ENCODE measurements at regions of chr5 and their contacts with region 1.

Region 1: DNA sequence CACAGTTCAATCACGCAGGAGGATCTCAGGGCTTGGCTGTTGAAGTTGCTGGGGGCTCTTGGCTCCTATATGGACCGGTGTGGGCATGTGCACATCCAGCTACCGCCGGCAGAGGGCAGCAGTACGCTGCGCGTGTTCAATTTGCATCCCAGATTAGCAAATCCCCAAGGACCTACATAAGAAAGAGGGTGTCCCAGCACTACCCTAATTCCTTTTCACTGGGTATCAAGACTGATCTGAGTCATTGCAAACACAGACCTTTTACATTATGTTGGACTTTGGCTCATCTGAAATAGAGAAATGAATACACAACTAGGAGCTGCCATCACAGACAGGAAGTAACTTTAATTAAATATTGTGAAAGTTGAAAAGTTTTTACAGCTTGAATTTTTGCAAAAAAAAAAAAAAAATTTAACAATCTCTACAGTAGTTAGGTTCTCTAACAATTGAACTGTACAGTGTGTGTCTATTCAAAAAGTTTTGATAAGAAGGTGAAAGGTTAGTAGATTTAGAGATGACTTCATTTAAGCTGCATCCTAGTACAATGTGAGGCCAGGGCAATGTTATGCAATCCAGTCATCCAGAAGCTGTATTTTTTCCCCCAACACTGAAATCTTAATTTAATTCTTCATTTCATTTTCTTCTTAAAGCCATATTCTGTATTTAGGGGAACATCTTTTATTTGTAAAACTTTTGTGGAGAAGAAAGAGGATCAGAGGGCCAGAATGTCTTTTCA is 404.0 kb downstream of the EBF1 start:
- DNase-seq: peak; percentile 85
- ATAC-seq: peak; percentile 94
- H3K4me3 ChIP-seq: no peak overlapping the region
- H3K27ac ChIP-seq: no peak overlapping the region
- H3K4me1 ChIP-seq: no peaks in the 10 kb centered on the region
- H3K27me3 ChIP-seq: no peaks in the 10 kb centered on the region
- CTCF ChIP-seq: peak; percentile 88 to 97 (median 88)
- EP300 ChIP-seq: peak; percentile 41 to 66; a peak in 2 of 4 replicates
- POLR2A ChIP-seq: no peak
- RAD21 ChIP-seq: peak; percentile 88

Region 2: GRCh38 chr5:158165638-158166037 is 530.1 kb before region 1 on chr5:
- CTCF ChIA-PET with region 1: interaction called, 11 read pairs
- POLR2A ChIA-PET with region 1: no interaction called
- RAD21 ChIA-PET with region 1: no interaction called
- SMC1A ChIA-PET with region 1: interaction called, 10 read pairs
- in situ Hi-C with region 1: no loop called
- intact Hi-C with region 1: no loop called
- DNase-seq: no peak
- ATAC-seq: no peak
- H3K4me3 ChIP-seq: no peak overlapping the region
- H3K27ac ChIP-seq: no peak overlapping the region
- H3K4me1 ChIP-seq: no peaks in the 10 kb centered on the region
- H3K27me3 ChIP-seq: peaks cover 2% of the 10 kb centered on the region in 2 experiments; a peak in 2 of 4 replicates
- CTCF ChIP-seq: peak in 2 of 3 experiments; percentile 8 to 14; a peak in 1 of 6 replicates
- EP300 ChIP-seq: no peak
- POLR2A ChIP-seq: no peak
- RAD21 ChIP-seq: no peak

Region 3: DNA sequence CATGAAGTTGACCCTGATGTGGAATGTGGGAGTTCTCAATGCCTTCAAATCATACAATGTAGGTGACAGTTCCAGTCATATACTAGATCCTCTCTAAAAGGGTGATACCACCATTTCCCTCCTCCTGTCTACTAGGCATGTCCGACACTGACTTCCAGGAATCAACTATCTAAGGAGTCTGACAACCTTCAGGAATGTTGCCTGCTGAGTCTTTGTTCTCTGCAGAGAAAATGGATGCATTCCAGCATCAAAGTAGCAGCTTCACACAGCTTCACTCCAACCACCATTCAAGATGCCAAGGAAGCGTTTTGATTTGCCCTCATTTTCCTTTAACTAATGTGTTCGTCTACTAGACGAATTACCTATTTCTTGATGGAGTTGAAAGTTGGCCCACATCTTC is 126.2 kb before region 1 on chr5:
- CTCF ChIA-PET with region 1: no interaction called
- POLR2A ChIA-PET with region 1: no interaction called
- RAD21 ChIA-PET with region 1: no interaction called
- SMC1A ChIA-PET with region 1: no interaction called
- in situ Hi-C with region 1: no loop called
- intact Hi-C with region 1: no loop called
- DNase-seq: no peak
- ATAC-seq: no peak
- H3K4me3 ChIP-seq: no peak overlapping the region
- H3K27ac ChIP-seq: no peak overlapping the region
- H3K4me1 ChIP-seq: peaks cover 4% of the 10 kb centered on the region
- H3K27me3 ChIP-seq: no peaks in the 10 kb centered on the region; a peak in 1 of 4 replicates
- CTCF ChIP-seq: no peak
- EP300 ChIP-seq: no peak
- POLR2A ChIP-seq: no peak
- RAD21 ChIP-seq: no peak

Region 4: DNA sequence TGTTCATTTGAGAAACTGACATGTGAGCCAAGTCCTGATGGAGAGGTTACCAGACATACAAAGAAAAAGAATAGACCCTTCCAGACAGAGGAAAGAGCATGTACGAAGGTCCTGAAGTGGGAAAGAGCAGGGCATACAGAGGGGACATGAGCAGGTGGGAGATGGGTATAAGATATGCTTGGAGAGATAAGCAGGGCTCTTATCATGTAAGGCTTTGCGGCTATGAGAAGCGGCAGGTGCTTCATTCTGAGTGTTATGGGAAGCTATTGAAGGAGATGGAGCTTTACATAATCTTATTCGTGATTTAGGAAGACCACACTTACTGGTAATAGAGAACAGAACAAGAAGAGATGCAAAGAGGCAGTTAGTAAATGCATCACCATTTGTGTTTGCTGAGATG is 13.1 kb before region 1 on chr5:
- CTCF ChIA-PET with region 1: interaction called, 18 read pairs
- POLR2A ChIA-PET with region 1: no interaction called
- RAD21 ChIA-PET with region 1: interaction called, 7 read pairs
- SMC1A ChIA-PET with region 1: interaction called, 11 read pairs
- in situ Hi-C with region 1: no loop called
- intact Hi-C with region 1: no loop called
- DNase-seq: no peak
- ATAC-seq: no peak
- H3K4me3 ChIP-seq: no peak overlapping the region
- H3K27ac ChIP-seq: no peak overlapping the region
- H3K4me1 ChIP-seq: peaks cover 3% of the 10 kb centered on the region; the same call in 1 of the 2 replicates
- H3K27me3 ChIP-seq: no peaks in the 10 kb centered on the region; a peak in 1 of 4 replicates
- CTCF ChIP-seq: no peak
- EP300 ChIP-seq: no peak
- POLR2A ChIP-seq: no peak
- RAD21 ChIP-seq: no peak

Region 5: DNA sequence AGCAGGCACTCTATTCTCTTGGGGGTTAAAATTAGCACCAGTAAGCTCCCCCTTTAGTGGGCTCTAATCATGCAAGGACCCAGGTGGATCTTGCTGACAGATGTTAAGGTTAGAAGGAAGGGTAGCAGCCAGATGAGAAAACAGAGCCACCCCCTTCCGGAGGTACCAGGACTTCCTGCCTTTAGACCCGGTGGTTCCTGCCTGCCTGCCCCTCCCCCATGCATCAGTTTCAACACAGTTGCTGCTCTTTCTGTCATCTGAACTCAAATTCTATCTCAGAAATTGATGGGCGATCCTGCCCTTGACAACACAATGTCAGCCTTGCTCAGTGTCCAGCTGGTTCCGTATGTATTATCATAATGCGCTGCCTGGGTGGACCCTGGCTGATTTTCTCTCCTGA is 116.6 kb after region 1 on chr5:
- CTCF ChIA-PET with region 1: interaction called, 10 read pairs
- POLR2A ChIA-PET with region 1: interaction called, 3 read pairs
- RAD21 ChIA-PET with region 1: interaction called, 5 read pairs
- SMC1A ChIA-PET with region 1: interaction called, 9 read pairs
- in situ Hi-C with region 1: no loop called
- intact Hi-C with region 1: no loop called
- DNase-seq: peak; percentile 51
- ATAC-seq: peak; percentile 82
- H3K4me3 ChIP-seq: no peak overlapping the region
- H3K27ac ChIP-seq: peak overlapping the region; percentile 17; the same call in 1 of the 2 replicates
- H3K4me1 ChIP-seq: peaks cover 16% of the 10 kb centered on the region; the same call in 1 of the 2 replicates
- H3K27me3 ChIP-seq: no peaks in the 10 kb centered on the region
- CTCF ChIP-seq: no peak
- EP300 ChIP-seq: no peak
- POLR2A ChIP-seq: no peak
- RAD21 ChIP-seq: 0 out of 2 replicates have a peak, but pooled peaks have one; percentile 3

Region 6: DNA sequence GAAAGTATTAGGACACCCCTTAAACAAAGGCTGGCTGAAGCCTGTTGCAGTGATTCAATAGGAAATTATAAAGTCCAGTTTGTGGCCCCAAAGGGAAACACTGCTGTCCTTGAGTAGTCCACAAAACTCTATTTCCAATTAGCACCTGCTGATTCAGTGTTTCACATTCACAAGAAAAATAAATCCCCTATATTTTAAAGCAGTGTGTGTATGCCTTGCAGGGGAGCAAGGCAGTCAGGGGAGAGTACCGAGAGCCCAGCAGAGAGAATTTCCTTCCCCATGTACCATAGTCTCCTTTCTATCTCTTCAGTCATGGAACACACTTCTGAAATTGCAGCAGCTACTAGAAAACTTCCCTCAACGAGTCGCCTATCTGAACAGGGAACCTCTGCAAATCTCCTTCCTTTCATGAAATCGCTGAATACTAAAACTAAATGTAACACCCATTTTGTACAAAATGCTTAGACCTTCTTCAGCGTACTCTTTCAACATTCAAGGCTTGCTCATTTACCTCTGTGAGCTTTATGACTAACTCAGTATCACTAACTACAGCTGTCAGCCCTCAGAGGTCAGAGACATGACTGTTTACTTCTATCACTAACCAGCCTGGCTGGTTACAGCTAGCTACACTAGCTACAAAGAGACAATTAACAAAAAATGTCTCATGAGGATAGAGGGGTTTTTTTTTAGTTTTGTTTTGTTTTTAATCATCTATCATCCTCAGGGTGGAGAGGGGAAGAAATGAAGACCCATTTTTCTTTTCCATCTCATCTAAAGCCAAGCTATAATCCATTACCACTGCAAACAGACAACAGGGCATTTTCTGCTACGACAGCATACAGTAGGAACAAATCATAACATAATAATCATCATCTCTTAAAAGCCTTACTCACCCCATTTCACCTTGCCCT is 215.3 kb after region 1 on chr5:
- CTCF ChIA-PET with region 1: no interaction called
- POLR2A ChIA-PET with region 1: interaction called, 4 read pairs
- RAD21 ChIA-PET with region 1: interaction called, 5 read pairs
- SMC1A ChIA-PET with region 1: no interaction called
- in situ Hi-C with region 1: no loop called
- intact Hi-C with region 1: loop called (anchors 5 kb)
- DNase-seq: no peak
- ATAC-seq: peak; percentile 88
- H3K4me3 ChIP-seq: no peak overlapping the region
- H3K27ac ChIP-seq: peak overlapping the region; percentile 50
- H3K4me1 ChIP-seq: peaks cover 32% of the 10 kb centered on the region
- H3K27me3 ChIP-seq: no peaks in the 10 kb centered on the region
- CTCF ChIP-seq: no peak
- EP300 ChIP-seq: peak; percentile 29 to 85; a peak in 2 of 4 replicates
- POLR2A ChIP-seq: no peak
- RAD21 ChIP-seq: no peak

Region 7: DNA sequence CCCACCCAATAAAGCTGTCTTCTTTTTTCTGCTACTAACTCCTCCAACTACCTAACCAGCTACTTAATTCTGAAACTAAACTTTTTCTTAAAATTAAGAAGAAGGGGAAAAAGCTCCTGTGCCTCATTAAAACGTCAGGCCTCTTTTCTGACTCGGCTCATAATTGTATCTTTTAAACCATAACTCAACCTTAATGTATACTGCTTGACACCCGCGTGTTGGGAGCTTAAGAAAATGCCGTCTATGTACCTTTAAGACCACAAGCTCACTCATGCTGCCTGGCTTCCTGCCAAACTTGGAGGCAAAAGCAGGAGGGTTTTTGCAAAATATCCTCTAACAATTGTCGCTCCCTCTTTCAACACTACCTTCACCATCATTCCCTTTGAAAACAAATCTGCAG is 399.0 kb after region 1 on chr5:
- CTCF ChIA-PET with region 1: interaction called, 13 read pairs
- POLR2A ChIA-PET with region 1: interaction called, 4 read pairs
- RAD21 ChIA-PET with region 1: interaction called, 50 read pairs
- SMC1A ChIA-PET with region 1: interaction called, 50 read pairs
- in situ Hi-C with region 1: no loop called
- intact Hi-C with region 1: no loop called
- DNase-seq: no peak
- ATAC-seq: peak; percentile 35
- H3K4me3 ChIP-seq: peak overlapping the region; percentile 88
- H3K27ac ChIP-seq: peak overlapping the region; percentile 68
- H3K4me1 ChIP-seq: peaks cover 5% of the 10 kb centered on the region; the same call in 1 of the 2 replicates
- H3K27me3 ChIP-seq: no peaks in the 10 kb centered on the region
- CTCF ChIP-seq: no peak
- EP300 ChIP-seq: no peak
- POLR2A ChIP-seq: no peak
- RAD21 ChIP-seq: no peak

Measured in GM12878 (cell line).